Activated naive CD4-positive, alpha-beta T cell treated with anti-CD3 and anti-CD28 coated beads, Interleukin-2, amount 10 ng/mL, durations not matched to agents 7 days and 5 days (primary cell): ENCODE measurements at regions of chr17 and their contacts with region 1.

Region 1: GRCh38 chr17:58317421-58318064 is 11.1 kb downstream of the TSPOAP1 start:
- DNase-seq: peak; percentile 79
- H3K4me3 Mint-ChIP-seq: no peak overlapping the region
- H3K27ac Mint-ChIP-seq: peak overlapping the region; percentile 75
- H3K4me1 Mint-ChIP-seq: peaks cover 13% of the 10 kb centered on the region
- H3K27me3 Mint-ChIP-seq: no peaks in the 10 kb centered on the region

Region 2: DNA sequence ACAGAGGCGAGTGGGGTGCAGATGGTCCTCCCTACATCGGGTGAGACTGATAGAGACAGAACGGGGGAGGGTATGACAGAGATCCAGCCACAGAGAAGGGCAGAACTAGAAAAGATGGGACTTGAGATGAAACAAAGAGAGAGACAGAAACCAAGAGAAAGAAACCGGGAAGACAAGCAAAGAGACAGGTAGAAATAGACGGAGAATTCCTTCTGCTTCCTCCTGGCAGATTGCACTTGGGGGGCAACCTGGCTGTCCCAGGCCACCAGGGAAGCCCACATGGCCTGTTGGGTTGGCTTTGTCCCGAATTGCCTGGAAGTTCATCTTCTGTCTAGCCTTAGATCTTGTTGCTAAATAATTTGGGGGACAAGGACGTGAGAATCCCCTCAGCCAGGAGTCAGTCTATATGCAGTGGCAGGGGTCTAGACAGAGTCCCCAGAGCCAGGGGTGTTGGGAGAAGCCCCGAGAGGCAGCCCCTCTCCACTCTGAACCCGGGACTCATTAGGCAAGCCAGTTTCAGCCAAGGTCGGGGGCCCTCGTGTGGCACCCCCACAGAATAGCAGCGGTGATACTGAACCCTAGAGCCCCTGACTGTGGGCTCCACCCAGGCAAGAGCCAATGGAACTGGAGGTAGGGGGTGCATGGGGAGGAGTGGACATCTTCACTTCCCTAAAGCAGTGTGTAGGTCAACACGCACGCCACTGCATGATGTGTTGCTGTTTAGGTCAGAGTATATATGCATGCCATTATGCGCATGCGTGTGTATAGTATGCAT is 11.7 kb after region 1 on chr17:
- CTCF ChIA-PET with region 1: interaction called, 14 read pairs
- DNase-seq: peak; percentile 85
- H3K4me3 Mint-ChIP-seq: peak overlapping the region; percentile 99
- H3K27ac Mint-ChIP-seq: peak overlapping the region; percentile 87
- H3K4me1 Mint-ChIP-seq: peaks cover 30% of the 10 kb centered on the region
- H3K27me3 Mint-ChIP-seq: peaks cover 38% of the 10 kb centered on the region

Region 3: GRCh38 chr17:58344047-58344790 is 26.7 kb after region 1 on chr17:
- CTCF ChIA-PET with region 1: interaction called, 54 read pairs
- DNase-seq: peak; percentile 90
- H3K4me3 Mint-ChIP-seq: peak overlapping the region; percentile 99
- H3K27ac Mint-ChIP-seq: peak overlapping the region; percentile 99
- H3K4me1 Mint-ChIP-seq: peaks cover 85% of the 10 kb centered on the region
- H3K27me3 Mint-ChIP-seq: no peaks in the 10 kb centered on the region

Region 4: DNA sequence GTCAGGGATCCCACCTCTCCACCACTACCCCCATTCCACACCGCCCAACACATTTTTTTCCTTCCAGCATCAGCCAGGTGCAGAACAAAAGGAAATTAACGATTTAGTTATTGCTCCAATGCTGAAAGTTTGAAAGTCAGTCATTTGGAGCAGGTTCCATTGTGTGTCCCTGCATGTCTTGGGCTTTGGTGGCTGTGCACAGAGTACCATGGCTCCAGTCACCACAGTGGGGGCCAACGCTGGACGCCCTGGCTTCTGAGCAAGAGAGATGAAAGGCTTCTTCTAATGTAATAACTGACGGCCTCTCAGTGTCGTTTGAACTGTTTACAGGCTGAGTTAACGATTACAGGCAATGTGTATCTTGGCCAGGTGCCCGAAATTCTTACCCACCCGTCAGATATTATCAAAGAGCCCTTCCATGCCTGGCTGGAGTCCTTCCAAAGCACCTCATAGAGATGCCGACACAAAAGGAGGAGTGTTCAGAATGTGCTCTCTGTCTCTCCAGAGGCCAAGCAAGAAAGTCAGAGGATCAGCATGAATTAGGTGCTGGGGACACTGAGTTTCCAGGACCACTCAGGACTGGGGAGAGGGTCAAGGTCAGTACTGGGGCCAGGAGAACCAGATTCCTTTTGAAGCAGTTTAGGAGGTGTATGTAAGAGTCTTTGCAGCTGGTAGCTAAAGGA is 73.9 kb after region 1 on chr17:
- CTCF ChIA-PET with region 1: no interaction called
- DNase-seq: no peak
- H3K4me3 Mint-ChIP-seq: no peak overlapping the region
- H3K27ac Mint-ChIP-seq: no peak overlapping the region
- H3K4me1 Mint-ChIP-seq: no peaks in the 10 kb centered on the region
- H3K27me3 Mint-ChIP-seq: peaks cover 10% of the 10 kb centered on the region

Region 5: DNA sequence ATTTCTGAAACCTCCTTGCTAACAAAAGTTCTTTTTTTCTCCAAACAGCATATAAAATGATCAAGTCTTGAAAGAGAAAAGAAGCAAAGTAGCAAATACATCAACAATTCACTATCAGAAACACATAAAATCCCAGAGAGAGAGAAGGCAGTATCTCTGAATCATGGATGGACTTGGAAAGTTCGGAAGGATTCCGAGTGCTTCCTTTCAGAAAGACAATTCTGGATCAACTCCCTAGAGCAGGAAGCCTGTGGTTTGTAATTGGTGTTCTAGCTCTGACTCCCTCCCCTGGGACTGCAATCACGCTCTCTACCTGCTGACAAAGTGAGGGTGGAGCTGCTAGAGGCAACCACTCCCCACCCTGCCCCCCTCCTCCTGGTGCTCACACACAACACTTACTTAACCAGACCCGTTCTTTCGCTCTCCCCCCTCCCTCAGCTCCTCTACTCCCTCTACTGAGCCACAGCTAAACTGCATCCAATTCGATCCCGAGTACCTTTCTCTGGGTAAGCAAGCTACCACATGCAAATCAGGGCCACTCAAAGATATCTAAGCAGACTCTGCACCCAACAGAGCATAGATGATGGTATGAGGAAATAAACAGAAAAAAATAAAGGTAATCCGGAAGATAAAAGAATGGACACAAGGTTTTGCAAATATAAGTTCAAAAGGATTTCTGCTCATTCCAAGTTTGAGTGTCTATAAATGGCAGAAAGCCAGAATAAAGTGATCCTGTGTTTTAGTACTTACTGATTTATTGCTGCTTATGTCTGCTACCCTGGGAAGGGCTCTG is 100.0 kb after region 1 on chr17 and contains the start of gene RNF43:
- CTCF ChIA-PET with region 1: interaction called, 61 read pairs
- DNase-seq: peak; percentile 93
- H3K4me3 Mint-ChIP-seq: no peak within 1 kb of the TSS
- H3K27ac Mint-ChIP-seq: no peak within 1 kb of the TSS
- H3K4me1 Mint-ChIP-seq: peaks cover 19% of the 10 kb centered on the region
- H3K27me3 Mint-ChIP-seq: peaks cover 7% of the 10 kb centered on the region

Region 6: GRCh38 chr17:58447039-58447975 is 129.8 kb after region 1 on chr17:
- CTCF ChIA-PET with region 1: interaction called, 22 read pairs
- DNase-seq: peak; percentile 86
- H3K4me3 Mint-ChIP-seq: no peak overlapping the region
- H3K27ac Mint-ChIP-seq: no peak overlapping the region
- H3K4me1 Mint-ChIP-seq: peaks cover 4% of the 10 kb centered on the region
- H3K27me3 Mint-ChIP-seq: no peaks in the 10 kb centered on the region

Region 7: DNA sequence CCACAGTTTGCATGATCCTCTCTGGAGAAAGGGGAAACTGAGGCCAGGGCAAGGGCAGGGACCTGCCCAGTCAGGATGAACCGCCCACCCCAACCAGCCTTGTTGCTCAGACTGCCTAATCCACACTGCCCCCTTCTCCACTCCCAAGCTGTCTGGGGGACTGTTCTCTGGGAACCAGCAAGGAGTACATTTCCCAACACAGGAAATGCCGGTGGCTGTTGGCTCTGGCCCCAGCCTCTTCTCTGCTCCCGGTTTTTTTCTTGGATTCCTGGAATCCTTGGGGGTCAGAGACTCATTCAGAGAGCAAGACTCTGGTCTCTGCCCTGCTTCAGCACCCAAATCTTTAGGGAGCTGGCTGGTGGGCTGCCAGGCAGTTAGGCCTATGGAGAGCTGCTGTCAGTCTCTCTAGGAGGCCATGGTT is 207.6 kb after region 1 on chr17:
- CTCF ChIA-PET with region 1: no interaction called
- DNase-seq: no peak
- H3K4me3 Mint-ChIP-seq: no peak overlapping the region
- H3K27ac Mint-ChIP-seq: no peak overlapping the region
- H3K4me1 Mint-ChIP-seq: peaks cover 18% of the 10 kb centered on the region
- H3K27me3 Mint-ChIP-seq: peaks cover 34% of the 10 kb centered on the region